Activated naive CD4-positive, alpha-beta T cell treated with anti-CD3 and anti-CD28 coated beads for 36 hours (primary cell): ENCODE measurements at regions of chr9 and their contacts with region 1.

Region 1: DNA sequence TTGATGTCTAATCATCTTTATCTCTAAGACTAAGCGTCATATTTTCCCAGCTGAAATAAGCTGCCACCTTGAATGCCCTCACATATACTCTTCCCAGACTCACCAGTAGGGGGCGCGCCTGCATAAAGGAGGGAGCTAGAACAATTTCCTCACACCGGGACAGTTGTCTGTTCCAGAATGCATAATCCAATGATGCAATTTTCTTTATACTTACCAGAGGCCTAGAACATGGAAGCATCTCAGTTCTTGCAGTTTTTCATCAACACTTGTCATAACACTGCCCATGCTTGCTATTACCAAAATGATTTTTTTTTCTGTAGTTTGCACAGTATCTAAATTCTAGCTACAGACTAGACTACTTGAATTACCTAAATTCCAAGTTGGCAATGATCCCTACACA is 203.9 kb downstream of the FRMD3 start:
- DNase-seq: peak; percentile 89
- H3K4me3 Mint-ChIP-seq: no peak overlapping the region
- H3K27ac Mint-ChIP-seq: no peak overlapping the region
- H3K4me1 Mint-ChIP-seq: peaks cover 3% of the 10 kb centered on the region
- H3K27me3 Mint-ChIP-seq: no peaks in the 10 kb centered on the region

Region 2: GRCh38 chr9:83266666-83267496 is 67.4 kb before region 1 on chr9:
- CTCF ChIA-PET with region 1: no interaction called
- intact Hi-C with region 1: no loop called
- DNase-seq: no peak
- H3K4me3 Mint-ChIP-seq: no peak overlapping the region
- H3K27ac Mint-ChIP-seq: no peak overlapping the region
- H3K4me1 Mint-ChIP-seq: no peaks in the 10 kb centered on the region
- H3K27me3 Mint-ChIP-seq: no peaks in the 10 kb centered on the region

Region 3: GRCh38 chr9:83382421-83382820 is 48.1 kb after region 1 on chr9:
- CTCF ChIA-PET with region 1: no interaction called
- intact Hi-C with region 1: no loop called
- DNase-seq: no peak
- H3K4me3 Mint-ChIP-seq: no peak overlapping the region
- H3K27ac Mint-ChIP-seq: no peak overlapping the region
- H3K4me1 Mint-ChIP-seq: no peaks in the 10 kb centered on the region
- H3K27me3 Mint-ChIP-seq: no peaks in the 10 kb centered on the region

Region 4: DNA sequence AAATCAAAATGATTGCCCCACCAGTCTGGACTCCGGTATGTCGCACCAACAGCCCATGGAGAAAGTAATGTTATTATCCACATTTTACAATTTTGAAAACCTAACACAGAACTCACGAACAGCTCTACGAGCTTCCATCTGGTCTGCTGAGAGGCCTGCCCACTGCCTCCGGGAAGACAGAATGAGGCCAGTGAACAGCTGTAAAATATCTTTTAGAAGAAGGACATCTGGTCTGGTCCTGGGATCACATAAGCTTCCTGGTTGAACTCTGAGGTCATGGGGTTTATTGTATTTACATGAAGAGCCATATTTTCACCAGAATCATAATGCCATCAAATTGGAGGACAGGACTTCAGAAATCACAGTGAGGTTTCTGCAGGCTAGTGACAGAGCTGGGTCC is 114.8 kb after region 1 on chr9:
- CTCF ChIA-PET with region 1: interaction called, 12 read pairs
- intact Hi-C with region 1: no loop called
- DNase-seq: no peak
- H3K4me3 Mint-ChIP-seq: no peak overlapping the region
- H3K27ac Mint-ChIP-seq: no peak overlapping the region
- H3K4me1 Mint-ChIP-seq: no peaks in the 10 kb centered on the region
- H3K27me3 Mint-ChIP-seq: no peaks in the 10 kb centered on the region

Region 5: GRCh38 chr9:83538172-83538889 is 204.0 kb after region 1 on chr9 and contains the start of gene FRMD3:
- CTCF ChIA-PET with region 1: interaction called, 117 read pairs
- intact Hi-C with region 1: no loop called
- DNase-seq: peak; percentile 36
- H3K4me3 Mint-ChIP-seq: peak within 1 kb of the TSS; percentile 38
- H3K27ac Mint-ChIP-seq: no peak within 1 kb of the TSS
- H3K4me1 Mint-ChIP-seq: peaks cover 4% of the 10 kb centered on the region
- H3K27me3 Mint-ChIP-seq: peaks cover 28% of the 10 kb centered on the region
- total RNA-seq, gene FRMD3: 0.12 TPM in 1 of 2 experiments, not detected in the other

Region 6: GRCh38 chr9:83596896-83597504 is 262.7 kb after region 1 on chr9:
- CTCF ChIA-PET with region 1: interaction called, 57 read pairs
- intact Hi-C with region 1: loop called (anchors 1 kb)
- DNase-seq: peak; percentile 69
- H3K4me3 Mint-ChIP-seq: no peak overlapping the region
- H3K27ac Mint-ChIP-seq: no peak overlapping the region
- H3K4me1 Mint-ChIP-seq: no peaks in the 10 kb centered on the region
- H3K27me3 Mint-ChIP-seq: no peaks in the 10 kb centered on the region

Region 7: DNA sequence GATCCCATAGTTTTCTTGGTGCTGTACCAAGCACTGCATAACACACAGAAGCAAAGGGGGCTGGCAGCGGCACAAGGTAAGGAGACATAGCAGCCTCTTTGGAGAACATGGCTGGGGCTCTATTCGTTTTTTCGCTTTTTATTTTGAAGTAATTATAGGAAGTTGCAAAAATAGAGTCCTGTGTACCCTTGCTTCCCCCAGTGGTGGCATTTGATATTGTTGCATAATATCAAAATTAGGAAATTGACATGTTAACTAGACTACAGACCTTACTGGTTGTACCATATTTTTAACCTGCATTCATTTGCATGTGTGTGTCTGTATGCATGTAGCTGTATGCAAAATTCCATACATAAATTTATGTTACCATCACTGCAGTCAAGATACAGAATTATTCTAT is 380.0 kb after region 1 on chr9:
- CTCF ChIA-PET with region 1: no interaction called
- intact Hi-C with region 1: loop called (anchors 10 kb)
- DNase-seq: no peak
- H3K4me3 Mint-ChIP-seq: no peak overlapping the region
- H3K27ac Mint-ChIP-seq: no peak overlapping the region
- H3K4me1 Mint-ChIP-seq: peaks cover 2% of the 10 kb centered on the region
- H3K27me3 Mint-ChIP-seq: no peaks in the 10 kb centered on the region